CD8-positive, alpha-beta T cell (primary cell): ENCODE measurements at regions of chr1 and their contacts with region 1.

Region 1: DNA sequence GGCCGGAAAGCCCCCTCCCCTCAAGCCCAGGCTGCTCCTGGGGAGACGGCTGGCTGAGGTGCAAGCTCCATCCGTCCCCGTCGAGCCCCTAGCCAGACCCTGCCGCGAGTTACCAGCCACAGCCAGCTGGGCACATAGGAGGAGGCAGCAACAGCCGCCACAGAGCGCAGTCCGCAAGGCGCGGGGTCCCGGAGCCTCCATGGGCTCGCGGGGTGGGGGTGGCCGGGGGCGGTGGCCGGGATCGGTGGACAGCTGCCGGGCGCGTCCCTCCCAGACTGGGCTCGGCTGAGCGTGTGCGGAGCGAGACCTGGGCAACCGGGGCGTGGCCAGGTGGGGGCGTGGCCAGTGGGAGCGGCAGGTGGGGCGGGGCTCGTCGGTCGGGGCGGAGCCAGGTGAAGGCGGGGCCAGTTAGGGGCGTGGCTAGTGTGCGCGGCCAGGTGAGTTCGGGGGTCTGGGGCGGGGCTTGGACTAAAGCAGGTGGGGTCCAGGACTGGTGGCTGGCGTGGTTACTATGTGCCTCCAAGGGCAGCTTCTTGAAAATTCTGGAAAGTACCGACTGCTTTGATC is at the start of gene CD164L2:
- DNase-seq: peak in 5 of 9 experiments; percentile 41 to 61 (median 58)
- ATAC-seq: peak; percentile 93
- H3K4me3 ChIP-seq: no peak within 1 kb of the TSS
- H3K4me3 Mint-ChIP-seq: no peak within 1 kb of the TSS
- H3K27ac ChIP-seq: no peak within 1 kb of the TSS
- H3K27ac Mint-ChIP-seq: no peak within 1 kb of the TSS
- H3K4me1 ChIP-seq: no peaks in the 10 kb centered on the region
- H3K4me1 Mint-ChIP-seq: peaks cover 2% of the 10 kb centered on the region
- H3K27me3 ChIP-seq: no peaks in the 10 kb centered on the region
- H3K27me3 Mint-ChIP-seq: peaks cover 3% of the 10 kb centered on the region
- CTCF ChIP-seq: no peak
- total RNA-seq, gene CD164L2: not detected

Region 2: DNA sequence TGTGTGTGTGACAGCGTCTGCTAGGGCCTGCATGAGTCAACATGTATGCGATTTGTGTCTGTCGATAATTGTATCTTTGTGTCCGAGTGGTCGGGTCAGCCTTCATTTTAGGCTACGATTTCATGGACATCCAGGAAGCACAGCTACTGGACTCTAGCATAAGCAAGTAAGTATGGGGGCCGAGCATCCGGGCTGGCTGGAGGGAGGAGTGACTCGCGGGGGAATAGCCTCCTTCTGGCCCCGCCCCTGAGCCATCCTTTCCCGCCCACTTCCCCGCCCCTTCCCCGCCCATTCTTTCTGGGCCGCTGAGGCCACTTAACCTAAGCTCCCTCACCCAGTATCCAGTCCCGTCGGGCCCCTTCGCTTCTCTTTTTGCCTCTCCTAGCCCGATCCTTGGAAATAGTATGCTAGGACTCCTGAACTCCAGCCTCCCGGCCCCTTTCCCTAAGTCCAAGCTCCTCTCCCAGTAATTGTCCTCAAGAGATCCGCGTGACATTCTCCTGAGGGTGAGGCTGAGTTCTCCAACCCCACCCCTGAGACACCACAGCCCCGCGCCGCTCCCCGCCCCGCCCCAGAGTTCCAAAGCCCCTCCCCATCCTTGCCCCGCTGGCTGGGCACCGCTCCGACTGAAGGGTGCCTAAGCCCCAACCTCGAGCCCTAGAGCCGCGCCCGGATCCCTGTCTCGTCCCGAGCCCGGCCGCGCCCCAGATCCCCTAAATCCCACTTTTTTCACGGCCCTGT is 17.6 kb before region 1 on chr1:
- CTCF ChIA-PET with region 1: interaction called, 140 read pairs
- POLR2A ChIA-PET with region 1: interaction called, 3 read pairs
- intact Hi-C with region 1: loop called in 1 of 2 experiments (anchors 1 kb)
- DNase-seq: peak; percentile 62 to 85 (median 78)
- ATAC-seq: peak; percentile 78
- H3K4me3 ChIP-seq: peak overlapping the region; percentile 66 to 73
- H3K4me3 Mint-ChIP-seq: peak overlapping the region; percentile 86
- H3K27ac ChIP-seq: no peak overlapping the region
- H3K27ac Mint-ChIP-seq: no peak overlapping the region
- H3K4me1 ChIP-seq: peaks cover 17% of the 10 kb centered on the region
- H3K4me1 Mint-ChIP-seq: peaks cover 34% of the 10 kb centered on the region
- H3K27me3 ChIP-seq: no peaks in the 10 kb centered on the region
- H3K27me3 Mint-ChIP-seq: no peaks in the 10 kb centered on the region
- CTCF ChIP-seq: no peak